Mammary epithelial cell (primary cell): ENCODE measurements at regions of chr14 and their contacts with region 1.

Region 1: DNA sequence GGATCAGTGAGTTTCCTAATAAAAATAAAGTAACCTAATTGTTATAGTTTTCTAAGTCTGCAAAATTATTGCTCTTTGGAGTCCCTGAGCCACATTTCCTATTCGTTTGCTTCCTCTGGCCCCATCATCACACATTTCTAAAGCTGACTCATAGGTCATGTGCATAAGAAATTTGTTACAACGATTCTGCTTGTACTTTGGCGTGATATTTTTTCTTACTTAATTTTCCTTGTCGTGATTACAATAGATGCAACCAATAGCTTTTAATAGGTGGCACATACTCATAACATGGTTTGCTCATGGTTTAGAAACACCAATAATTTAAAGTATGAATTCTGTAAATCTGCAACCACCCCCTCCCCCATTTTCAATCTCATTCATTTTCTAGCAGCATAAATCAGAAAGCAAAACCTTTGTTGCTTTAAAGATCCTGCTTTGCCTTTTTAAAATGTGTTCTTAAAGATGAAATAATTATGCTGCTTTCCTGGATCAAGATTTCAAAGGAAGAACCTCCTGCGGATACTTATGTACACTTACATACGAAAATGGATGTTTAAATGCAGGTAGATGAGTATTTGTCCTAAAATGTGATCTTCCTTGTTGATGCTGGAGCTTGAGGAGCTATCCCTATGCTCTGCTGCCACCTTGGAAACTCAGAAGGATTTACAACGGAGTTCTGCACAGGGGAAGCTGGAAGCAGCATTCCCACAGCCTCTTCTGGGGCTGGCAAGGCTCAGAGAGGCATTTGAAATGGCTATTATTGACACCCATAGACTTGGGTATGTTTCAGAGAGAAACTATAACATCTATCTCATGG is 1.7 kb upstream of the FLRT2 start:
- DNase-seq: peak; percentile 77
- H3K4me3 ChIP-seq: peak overlapping the region; percentile 89 to 90 (median 89)
- H3K27ac ChIP-seq: peak overlapping the region; percentile 67
- H3K4me1 ChIP-seq: peaks cover 35% of the 10 kb centered on the region
- H3K27me3 ChIP-seq: no peaks in the 10 kb centered on the region
- CTCF ChIP-seq: peak; percentile 62 to 79

Region 2: GRCh38 chr14:84975241-84975902 is 552.9 kb before region 1 on chr14:
- CTCF ChIA-PET with region 1: no interaction called
- dilution Hi-C with region 1: no loop called
- in situ Hi-C with region 1: loop called in 1 of 2 experiments (anchors 25 kb)
- intact Hi-C with region 1: loop called (anchors 10 kb)
- DNase-seq: no peak
- H3K4me3 ChIP-seq: no peak overlapping the region
- H3K27ac ChIP-seq: peak overlapping the region; percentile 42
- H3K4me1 ChIP-seq: peaks cover 16% of the 10 kb centered on the region
- H3K27me3 ChIP-seq: no peaks in the 10 kb centered on the region
- CTCF ChIP-seq: no peak

Region 3: GRCh38 chr14:85122690-85123089 is 405.6 kb before region 1 on chr14:
- CTCF ChIA-PET with region 1: no interaction called
- dilution Hi-C with region 1: no loop called
- in situ Hi-C with region 1: no loop called
- intact Hi-C with region 1: no loop called
- DNase-seq: peak; percentile 2
- H3K4me3 ChIP-seq: no peak overlapping the region
- H3K27ac ChIP-seq: no peak overlapping the region
- H3K4me1 ChIP-seq: no peaks in the 10 kb centered on the region
- H3K27me3 ChIP-seq: no peaks in the 10 kb centered on the region
- CTCF ChIP-seq: no peak

Region 4: GRCh38 chr14:85195872-85196477 is 332.3 kb before region 1 on chr14:
- CTCF ChIA-PET with region 1: no interaction called
- dilution Hi-C with region 1: no loop called
- in situ Hi-C with region 1: no loop called
- intact Hi-C with region 1: loop called (anchors 1 kb)
- DNase-seq: no peak
- H3K4me3 ChIP-seq: no peak overlapping the region
- H3K27ac ChIP-seq: no peak overlapping the region
- H3K4me1 ChIP-seq: no peaks in the 10 kb centered on the region
- H3K27me3 ChIP-seq: no peaks in the 10 kb centered on the region
- CTCF ChIP-seq: peak; percentile 59 to 65

Region 5: GRCh38 chr14:85415015-85415712 is 113.1 kb before region 1 on chr14:
- CTCF ChIA-PET with region 1: no interaction called
- dilution Hi-C with region 1: no loop called
- in situ Hi-C with region 1: loop called (anchors 5 kb)
- intact Hi-C with region 1: loop called (anchors 1 kb)
- DNase-seq: peak; percentile 99
- H3K4me3 ChIP-seq: peak overlapping the region; percentile 25 to 40 (median 37)
- H3K27ac ChIP-seq: peak overlapping the region; percentile 98
- H3K4me1 ChIP-seq: peaks cover 43% of the 10 kb centered on the region
- H3K27me3 ChIP-seq: no peaks in the 10 kb centered on the region
- CTCF ChIP-seq: peak; percentile 67 to 76

Region 6: GRCh38 chr14:85565862-85566296 is 37.6 kb after region 1 on chr14:
- CTCF ChIA-PET with region 1: no interaction called
- dilution Hi-C with region 1: no loop called
- in situ Hi-C with region 1: no loop called
- intact Hi-C with region 1: loop called (anchors 2 kb)
- DNase-seq: peak; percentile 95
- H3K4me3 ChIP-seq: no peak overlapping the region
- H3K27ac ChIP-seq: peak overlapping the region; percentile 99
- H3K4me1 ChIP-seq: peaks cover 26% of the 10 kb centered on the region
- H3K27me3 ChIP-seq: no peaks in the 10 kb centered on the region
- CTCF ChIP-seq: no peak

Region 7: GRCh38 chr14:86057018-86057667 is 528.9 kb after region 1 on chr14:
- CTCF ChIA-PET with region 1: no interaction called
- dilution Hi-C with region 1: no loop called
- in situ Hi-C with region 1: no loop called
- intact Hi-C with region 1: loop called (anchors 1 kb)
- DNase-seq: no peak
- H3K4me3 ChIP-seq: no peak overlapping the region
- H3K27ac ChIP-seq: no peak overlapping the region
- H3K4me1 ChIP-seq: no peaks in the 10 kb centered on the region
- H3K27me3 ChIP-seq: no peaks in the 10 kb centered on the region
- CTCF ChIP-seq: peak; percentile 85 to 87